Heart right ventricle (tissue), 16 donors: ENCODE measurements at regions of chr1 and their contacts with region 1.

Region 1: DNA sequence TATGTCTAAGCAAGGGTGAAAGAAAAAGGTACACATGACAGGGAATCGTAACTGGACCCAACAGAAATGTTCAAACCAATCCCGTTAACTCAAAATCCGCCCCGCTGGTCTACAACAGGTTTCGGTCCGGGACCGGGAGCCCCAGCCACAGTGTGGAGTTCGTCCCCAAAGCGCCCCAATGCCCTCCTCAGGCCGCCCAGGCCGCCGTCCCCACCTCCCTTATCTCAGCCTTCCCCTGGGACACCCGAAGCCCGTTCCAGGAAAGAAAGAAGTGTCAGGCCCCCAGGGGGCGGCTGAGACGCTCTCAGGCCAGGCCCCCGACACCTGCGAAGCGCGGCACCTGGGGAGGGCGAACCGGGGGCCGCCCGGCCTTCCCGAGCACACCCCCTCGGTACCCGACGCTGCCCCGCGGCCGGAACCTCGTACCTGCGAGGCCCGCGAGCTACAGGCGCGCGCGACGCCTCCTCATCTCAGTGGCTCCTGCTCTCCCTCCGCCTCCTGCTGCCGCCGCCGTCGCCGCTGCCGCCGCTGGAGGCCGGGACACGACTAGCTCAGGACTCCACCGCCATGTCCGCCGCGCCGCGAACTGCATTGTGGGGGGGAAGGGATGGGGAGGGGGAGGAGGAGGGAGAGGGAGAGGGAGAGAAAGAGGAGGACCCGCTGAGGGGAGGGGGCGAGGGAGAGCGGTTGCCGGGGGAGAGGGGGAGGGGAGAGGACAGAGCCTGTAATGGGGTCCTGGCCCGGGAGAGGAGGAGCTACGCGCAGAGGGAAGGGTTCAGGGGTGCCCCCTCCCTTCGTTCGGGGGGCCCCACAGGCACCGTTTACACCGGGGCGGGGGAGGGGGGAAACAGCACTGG is at the start of gene TUT4:
- DNase-seq: peak; percentile 81 to 86
- ATAC-seq: peak; percentile 88 to 96 (median 92)
- H3K4me3 ChIP-seq: peak within 1 kb of the TSS; percentile 87 to 99 (median 96)
- H3K27ac ChIP-seq: peak within 1 kb of the TSS; percentile 67 to 94 (median 89)
- H3K4me1 ChIP-seq: peaks cover 0 to 37% (median 27%) of the 10 kb centered on the region in 9 donors
- H3K27me3 ChIP-seq: no peaks in the 10 kb centered on the region
- CTCF ChIP-seq: peak in 3 of 9 donors; percentile 21 to 24 (median 23)
- total RNA-seq, gene TUT4: 25.5 to 40.6 (median 32.5) TPM

Region 2: GRCh38 chr1:52482326-52483004 is 70.3 kb before region 1 on chr1:
- intact Hi-C with region 1: loop called in 1 of 10 experiments (anchors 1 kb)
- DNase-seq: no peak
- ATAC-seq: no peak
- H3K4me3 ChIP-seq: no peak overlapping the region
- H3K27ac ChIP-seq: no peak overlapping the region
- H3K4me1 ChIP-seq: no peaks in the 10 kb centered on the region
- H3K27me3 ChIP-seq: no peaks in the 10 kb centered on the region
- CTCF ChIP-seq: no peak

Region 3: DNA sequence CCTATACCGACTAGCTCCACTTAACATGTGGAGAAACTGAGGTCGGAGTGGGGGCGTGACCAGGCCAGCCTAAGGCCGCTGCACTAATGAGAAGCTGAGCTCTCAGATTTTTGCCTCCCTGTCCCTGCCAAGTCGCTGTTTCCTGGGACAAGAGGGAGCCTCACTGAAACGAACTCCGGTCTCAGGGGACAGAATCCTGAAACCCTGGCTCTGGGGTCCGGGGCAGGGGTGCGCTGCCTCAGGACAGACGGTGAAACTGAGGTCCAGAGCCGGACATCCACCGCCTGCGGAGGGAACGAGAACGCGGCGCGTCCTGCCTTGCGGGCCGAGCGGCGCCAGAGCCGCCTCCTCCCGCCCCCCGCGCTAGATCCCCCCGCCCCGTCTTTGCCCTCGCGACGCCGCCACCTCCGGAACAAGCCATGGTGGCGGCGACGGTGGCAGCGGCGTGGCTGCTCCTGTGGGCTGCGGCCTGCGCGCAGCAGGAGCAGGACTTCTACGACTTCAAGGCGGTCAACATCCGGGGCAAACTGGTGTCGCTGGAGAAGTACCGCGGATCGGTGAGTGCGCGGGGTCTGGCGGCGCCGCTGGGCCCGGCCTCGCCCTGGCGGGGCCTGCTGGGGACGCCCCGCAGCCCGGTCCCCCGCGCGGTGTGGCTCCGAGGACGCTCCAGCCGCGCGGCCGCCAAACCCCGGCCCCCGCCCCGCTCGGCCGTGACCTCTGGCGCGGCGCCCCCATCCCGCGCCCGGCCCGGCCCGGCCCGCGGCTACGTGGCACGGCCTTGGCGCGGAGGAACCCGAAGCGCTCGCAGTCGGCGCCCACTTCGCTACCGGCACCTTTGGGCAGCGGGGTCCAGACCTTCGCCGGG is 49.5 kb after region 1 on chr1 and contains the start of gene GPX7:
- intact Hi-C with region 1: loop called in 5 of 10 experiments (anchors 2 to 5 kb)
- DNase-seq: peak; percentile 39 to 49
- ATAC-seq: peak; percentile 57 to 83 (median 71)
- H3K4me3 ChIP-seq: peak within 1 kb of the TSS; percentile 44 to 69 (median 60)
- H3K27ac ChIP-seq: peak within 1 kb of the TSS; percentile 70 to 92 (median 84)
- H3K4me1 ChIP-seq: peaks cover 3 to 42% (median 27%) of the 10 kb centered on the region in 9 donors
- H3K27me3 ChIP-seq: no peaks in the 10 kb centered on the region
- CTCF ChIP-seq: no peak
- total RNA-seq, gene GPX7: 3.3 to 14.6 (median 6.5) TPM

Region 4: GRCh38 chr1:52636721-52637695 is 84.3 kb after region 1 on chr1:
- intact Hi-C with region 1: loop called in 1 of 10 experiments (anchors 10 kb)
- DNase-seq: no peak
- ATAC-seq: peak in 5 of 8 donors; percentile 18 to 62 (median 46)
- H3K4me3 ChIP-seq: peak overlapping the region in 1 of 10 donors; percentile 17
- H3K27ac ChIP-seq: peak overlapping the region in 3 of 10 donors; percentile 14 to 89 (median 25)
- H3K4me1 ChIP-seq: peaks cover 0 to 37% (median 8%) of the 10 kb centered on the region in 9 donors
- H3K27me3 ChIP-seq: peaks cover 11 to 26% (median 22%) of the 10 kb centered on the region in 7 donors
- CTCF ChIP-seq: no peak

Region 5: GRCh38 chr1:52674497-52675384 is 122.0 kb after region 1 on chr1:
- intact Hi-C with region 1: loop called in 1 of 10 experiments (anchors 10 kb)
- DNase-seq: no peak
- ATAC-seq: no peak
- H3K4me3 ChIP-seq: no peak overlapping the region
- H3K27ac ChIP-seq: no peak overlapping the region
- H3K4me1 ChIP-seq: peaks cover 0 to 19% (median 10%) of the 10 kb centered on the region in 9 donors
- H3K27me3 ChIP-seq: no peaks in the 10 kb centered on the region
- CTCF ChIP-seq: no peak